CD8-positive, alpha-beta T cell (primary cell): ENCODE measurements at regions of chr3 and their contacts with region 1.

Region 1: GRCh38 chr3:122679085-122679881 is 1.4 kb upstream of the PARP14 start:
- DNase-seq: peak; percentile 65 to 92 (median 83)
- ATAC-seq: peak; percentile 66
- H3K4me3 ChIP-seq: peak overlapping the region; percentile 88 to 98
- H3K4me3 Mint-ChIP-seq: peak overlapping the region; percentile 93
- H3K27ac ChIP-seq: peak overlapping the region; percentile 95 to 97
- H3K27ac Mint-ChIP-seq: peak overlapping the region; percentile 99
- H3K4me1 ChIP-seq: peaks cover 31% of the 10 kb centered on the region
- H3K4me1 Mint-ChIP-seq: peaks cover 51% of the 10 kb centered on the region
- H3K27me3 ChIP-seq: no peaks in the 10 kb centered on the region
- H3K27me3 Mint-ChIP-seq: no peaks in the 10 kb centered on the region
- CTCF ChIP-seq: peak; percentile 80

Region 2: GRCh38 chr3:121660356-121661171 is 1018.7 kb before region 1 on chr3 and contains the start of gene HCLS1:
- CTCF ChIA-PET with region 1: no interaction called
- POLR2A ChIA-PET with region 1: no interaction called
- intact Hi-C with region 1: loop called (anchors 2 to 10 kb)
- DNase-seq: peak; percentile 52 to 90 (median 71)
- ATAC-seq: peak; percentile 83
- H3K4me3 ChIP-seq: peak within 1 kb of the TSS; percentile 58
- H3K4me3 Mint-ChIP-seq: peak within 1 kb of the TSS; percentile 92
- H3K27ac ChIP-seq: peak within 1 kb of the TSS; percentile 86 to 95
- H3K27ac Mint-ChIP-seq: peak within 1 kb of the TSS; percentile 99
- H3K4me1 ChIP-seq: peaks cover 43% of the 10 kb centered on the region
- H3K4me1 Mint-ChIP-seq: peaks cover 54% of the 10 kb centered on the region
- H3K27me3 ChIP-seq: no peaks in the 10 kb centered on the region
- H3K27me3 Mint-ChIP-seq: no peaks in the 10 kb centered on the region
- CTCF ChIP-seq: no peak
- total RNA-seq, gene HCLS1: 162 to 179 TPM

Region 3: DNA sequence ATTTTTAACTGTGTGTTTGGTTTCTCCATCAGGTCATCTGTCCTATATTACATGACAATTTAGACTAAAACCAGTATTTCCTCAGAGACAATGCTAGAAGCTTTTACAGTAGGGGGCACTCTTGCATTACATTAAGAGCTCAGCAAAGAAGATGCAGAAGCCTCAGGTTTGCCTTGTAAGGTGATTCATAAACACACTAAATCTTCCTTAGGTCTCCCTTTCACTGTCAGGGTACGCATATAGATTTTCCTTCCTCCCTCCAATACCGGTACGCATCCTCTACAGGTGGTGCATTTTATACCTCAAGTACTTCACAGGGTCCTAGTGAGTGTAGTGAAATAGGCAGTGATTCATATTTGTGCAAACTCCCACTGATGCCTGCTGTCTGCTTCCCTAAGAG is 577.6 kb before region 1 on chr3:
- CTCF ChIA-PET with region 1: no interaction called
- POLR2A ChIA-PET with region 1: interaction called, 3 read pairs
- intact Hi-C with region 1: loop called (anchors 2 to 5 kb)
- DNase-seq: peak in 3 of 9 experiments; percentile 16 to 78 (median 67)
- ATAC-seq: peak; percentile 72
- H3K4me3 ChIP-seq: no peak overlapping the region
- H3K4me3 Mint-ChIP-seq: no peak overlapping the region
- H3K27ac ChIP-seq: no peak overlapping the region
- H3K27ac Mint-ChIP-seq: no peak overlapping the region
- H3K4me1 ChIP-seq: peaks cover 6% of the 10 kb centered on the region
- H3K4me1 Mint-ChIP-seq: peaks cover 15% of the 10 kb centered on the region
- H3K27me3 ChIP-seq: no peaks in the 10 kb centered on the region
- H3K27me3 Mint-ChIP-seq: no peaks in the 10 kb centered on the region
- CTCF ChIP-seq: peak; percentile 39

Region 4: GRCh38 chr3:122415720-122416654 is 263.3 kb before region 1 on chr3 and contains the start of gene WDR5B:
- CTCF ChIA-PET with region 1: interaction called, 7 read pairs
- POLR2A ChIA-PET with region 1: interaction called, 3 read pairs
- intact Hi-C with region 1: loop called in 1 of 2 experiments (anchors 2 kb)
- DNase-seq: peak; percentile 97 to 99 (median 98)
- ATAC-seq: peak; percentile 88
- H3K4me3 ChIP-seq: peak within 1 kb of the TSS; percentile 71 to 76
- H3K4me3 Mint-ChIP-seq: peak within 1 kb of the TSS; percentile 97
- H3K27ac ChIP-seq: peak within 1 kb of the TSS; percentile 91 to 94
- H3K27ac Mint-ChIP-seq: peak within 1 kb of the TSS; percentile 100
- H3K4me1 ChIP-seq: peaks cover 26% of the 10 kb centered on the region
- H3K4me1 Mint-ChIP-seq: peaks cover 58% of the 10 kb centered on the region
- H3K27me3 ChIP-seq: no peaks in the 10 kb centered on the region
- H3K27me3 Mint-ChIP-seq: no peaks in the 10 kb centered on the region
- CTCF ChIP-seq: no peak
- total RNA-seq, gene WDR5B: 1.9 to 2.7 TPM

Region 5: DNA sequence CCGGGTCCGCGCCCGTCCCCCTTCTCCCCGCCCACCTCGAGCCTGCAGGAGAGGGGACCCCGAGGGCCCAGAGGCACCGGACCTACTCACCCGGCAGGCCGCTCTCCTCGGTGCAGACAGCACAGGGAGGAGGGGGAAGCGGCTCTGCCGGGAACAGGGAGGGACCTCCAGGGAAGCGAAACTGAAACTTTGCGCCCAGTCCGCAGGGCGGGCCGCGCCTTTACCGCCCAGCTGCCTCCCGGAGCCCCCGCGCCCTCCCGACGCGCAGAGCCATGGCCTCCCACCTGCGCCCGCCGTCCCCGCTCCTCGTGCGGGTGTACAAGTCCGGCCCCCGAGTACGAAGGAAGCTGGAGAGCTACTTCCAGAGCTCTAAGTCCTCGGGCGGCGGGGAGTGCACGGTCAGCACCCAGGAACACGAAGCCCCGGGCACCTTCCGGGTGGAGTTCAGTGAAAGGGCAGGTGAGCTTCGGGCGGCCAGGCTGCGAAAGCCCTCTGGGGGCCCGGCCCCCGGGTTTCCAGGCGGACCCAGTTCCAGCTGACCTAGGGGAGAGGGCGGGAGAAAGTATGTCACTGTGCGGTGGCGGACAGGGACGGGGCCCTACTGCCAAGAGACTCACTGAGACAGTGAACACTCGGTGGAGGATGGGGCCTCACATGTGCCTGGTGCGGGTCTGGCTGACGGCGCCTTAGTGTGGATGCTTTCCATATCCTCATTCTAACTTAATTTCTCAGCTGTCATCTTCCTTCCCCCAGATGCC is 114.9 kb before region 1 on chr3 and contains the starts of genes DTX3L and PARP9:
- CTCF ChIA-PET with region 1: interaction called, 184 read pairs
- POLR2A ChIA-PET with region 1: interaction called, 27 read pairs
- intact Hi-C with region 1: loop called (anchors 1 kb)
- DNase-seq: peak; percentile 39 to 91 (median 80)
- ATAC-seq: peak; percentile 93
- H3K4me3 ChIP-seq: peak within 1 kb of the TSS; percentile 81 to 85
- H3K4me3 Mint-ChIP-seq: peak within 1 kb of the TSS; percentile 92
- H3K27ac ChIP-seq: peak within 1 kb of the TSS; percentile 83 to 88
- H3K27ac Mint-ChIP-seq: peak within 1 kb of the TSS; percentile 96
- H3K4me1 ChIP-seq: peaks cover 39% of the 10 kb centered on the region
- H3K4me1 Mint-ChIP-seq: peaks cover 75% of the 10 kb centered on the region
- H3K27me3 ChIP-seq: no peaks in the 10 kb centered on the region
- H3K27me3 Mint-ChIP-seq: no peaks in the 10 kb centered on the region
- CTCF ChIP-seq: no peak
- total RNA-seq, gene DTX3L: 14.1 to 14.3 TPM
- total RNA-seq, gene PARP9: 12.0 to 12.1 TPM

Region 6: DNA sequence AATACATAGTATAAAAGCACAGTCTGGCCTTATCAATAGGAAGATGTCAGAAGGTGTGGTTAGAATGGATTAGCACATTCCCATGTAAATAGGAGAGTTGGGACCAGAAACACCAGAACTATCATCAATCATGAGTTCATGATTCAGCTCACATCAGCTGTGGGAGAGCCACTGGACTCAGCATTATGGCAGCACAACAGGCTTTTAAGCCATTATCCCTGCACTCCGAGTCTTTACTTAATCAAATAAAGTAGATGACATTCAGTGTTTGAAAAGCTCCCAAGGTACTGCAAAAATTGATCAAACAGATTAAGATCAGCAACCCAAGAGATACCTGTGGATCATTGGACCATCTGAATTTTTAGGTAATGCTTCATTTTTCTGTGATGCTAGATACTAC is 26.1 kb after region 1 on chr3:
- CTCF ChIA-PET with region 1: no interaction called
- POLR2A ChIA-PET with region 1: no interaction called
- intact Hi-C with region 1: no loop called
- DNase-seq: no peak
- ATAC-seq: no peak
- H3K4me3 ChIP-seq: no peak overlapping the region
- H3K4me3 Mint-ChIP-seq: no peak overlapping the region
- H3K27ac ChIP-seq: no peak overlapping the region
- H3K27ac Mint-ChIP-seq: no peak overlapping the region
- H3K4me1 ChIP-seq: no peaks in the 10 kb centered on the region
- H3K4me1 Mint-ChIP-seq: peaks cover 19% of the 10 kb centered on the region
- H3K27me3 ChIP-seq: no peaks in the 10 kb centered on the region
- H3K27me3 Mint-ChIP-seq: no peaks in the 10 kb centered on the region
- CTCF ChIP-seq: no peak

Region 7: DNA sequence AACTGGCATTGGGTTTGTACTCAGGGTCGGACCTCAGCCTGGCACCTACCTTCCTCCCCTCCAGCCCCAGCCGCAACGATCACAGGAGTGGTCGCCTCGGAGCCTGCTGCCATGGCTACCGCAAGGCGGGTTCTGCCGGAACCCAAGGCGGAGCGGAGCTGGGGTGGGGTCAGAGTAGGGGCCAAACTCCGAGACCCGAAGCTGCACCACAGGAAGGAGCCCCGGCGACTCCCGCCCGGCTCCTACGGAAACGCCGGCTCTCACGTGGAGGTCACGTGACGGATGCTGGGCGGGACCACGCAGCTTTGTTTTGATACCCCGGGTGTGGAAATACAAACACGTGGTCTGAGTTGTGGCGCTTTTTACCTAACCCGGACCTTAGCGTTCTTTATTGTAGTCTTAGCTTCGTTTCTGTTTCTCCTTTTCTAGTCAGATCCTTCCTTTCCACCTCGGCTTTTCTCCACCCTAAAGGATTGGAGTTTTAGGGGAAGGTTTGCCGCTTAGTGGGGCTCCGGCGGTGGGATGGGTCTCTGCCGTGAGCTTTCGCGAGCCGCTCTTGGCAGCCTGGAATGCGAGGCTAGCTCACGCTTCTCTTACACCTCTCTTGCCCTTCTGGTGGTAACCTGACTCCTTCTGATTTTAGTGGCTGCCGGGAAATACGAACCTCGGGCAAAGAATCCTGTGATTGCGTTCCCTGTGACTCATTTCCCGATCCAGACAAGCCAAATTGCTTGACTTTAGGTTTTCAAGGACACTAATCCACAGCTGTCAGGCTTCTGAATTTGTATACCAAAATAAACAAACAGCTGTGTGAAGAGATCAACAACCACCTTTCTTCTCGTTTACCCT is 114.5 kb after region 1 on chr3 and contains the start of gene HSPBAP1:
- CTCF ChIA-PET with region 1: interaction called, 3 read pairs
- POLR2A ChIA-PET with region 1: interaction called, 6 read pairs
- intact Hi-C with region 1: loop called (anchors 1 to 2 kb)
- DNase-seq: peak; percentile 72 to 95 (median 90)
- ATAC-seq: peak; percentile 67
- H3K4me3 ChIP-seq: peak within 1 kb of the TSS; percentile 78 to 81
- H3K4me3 Mint-ChIP-seq: peak within 1 kb of the TSS; percentile 91
- H3K27ac ChIP-seq: peak within 1 kb of the TSS; percentile 77 to 91
- H3K27ac Mint-ChIP-seq: no peak within 1 kb of the TSS
- H3K4me1 ChIP-seq: peaks cover 28% of the 10 kb centered on the region
- H3K4me1 Mint-ChIP-seq: peaks cover 38% of the 10 kb centered on the region
- H3K27me3 ChIP-seq: no peaks in the 10 kb centered on the region
- H3K27me3 Mint-ChIP-seq: no peaks in the 10 kb centered on the region
- CTCF ChIP-seq: no peak
- total RNA-seq, gene HSPBAP1: 8.7 to 9.3 TPM

Region 8: DNA sequence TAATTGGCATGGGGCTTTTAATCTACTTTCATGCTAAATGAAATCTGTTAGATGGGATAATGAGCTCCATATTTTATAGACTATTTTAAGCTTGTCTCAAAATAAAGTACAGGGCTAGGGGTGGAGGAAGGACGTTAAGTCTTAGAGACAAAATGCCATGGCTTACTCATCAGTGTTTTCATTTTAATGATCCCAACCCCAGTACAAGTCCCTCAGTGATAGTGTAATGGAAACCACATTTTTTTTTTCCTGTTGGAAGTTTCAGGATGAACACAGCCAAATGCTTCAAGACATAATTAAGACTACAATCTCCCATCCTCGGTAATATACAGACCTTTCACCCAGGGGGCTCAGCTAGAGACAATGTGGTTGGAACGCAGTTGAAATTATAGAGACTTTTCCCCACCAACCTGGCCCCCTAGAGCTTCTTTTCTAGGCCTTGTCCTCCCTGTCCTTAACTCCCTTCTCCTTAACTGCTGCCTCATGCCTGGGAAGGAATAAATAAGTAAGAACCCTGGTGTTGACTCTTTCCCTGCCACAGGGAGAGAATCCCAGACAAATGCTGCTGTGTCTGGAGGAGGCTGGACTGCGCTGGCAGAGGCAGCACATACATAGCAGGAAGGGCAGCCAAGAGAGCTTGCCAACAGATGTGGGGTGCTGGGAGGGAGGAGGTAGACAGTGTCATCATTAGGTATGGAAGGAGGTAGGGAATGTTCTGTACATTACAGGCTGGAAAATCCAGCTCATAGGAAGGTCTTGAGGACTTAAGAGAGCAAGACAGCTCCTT is 1428.0 kb after region 1 on chr3:
- CTCF ChIA-PET with region 1: no interaction called
- POLR2A ChIA-PET with region 1: no interaction called
- intact Hi-C with region 1: no loop called
- DNase-seq: no peak
- ATAC-seq: no peak
- H3K4me3 ChIP-seq: no peak overlapping the region
- H3K4me3 Mint-ChIP-seq: no peak overlapping the region
- H3K27ac ChIP-seq: no peak overlapping the region
- H3K27ac Mint-ChIP-seq: no peak overlapping the region
- H3K4me1 ChIP-seq: no peaks in the 10 kb centered on the region
- H3K4me1 Mint-ChIP-seq: no peaks in the 10 kb centered on the region
- H3K27me3 ChIP-seq: no peaks in the 10 kb centered on the region
- H3K27me3 Mint-ChIP-seq: peaks cover under 1% of the 10 kb centered on the region
- CTCF ChIP-seq: no peak